Mammary epithelial cell (primary cell): ENCODE measurements at regions of chr1 and their contacts with region 1.

Region 1: GRCh38 chr1:180631766-180632325 is at the start of gene XPR1:
- DNase-seq: peak; percentile 97
- H3K4me3 ChIP-seq: peak within 1 kb of the TSS; percentile 83 to 99 (median 96)
- H3K27ac ChIP-seq: peak within 1 kb of the TSS; percentile 64
- H3K4me1 ChIP-seq: peaks cover 13% of the 10 kb centered on the region
- H3K27me3 ChIP-seq: no peaks in the 10 kb centered on the region
- CTCF ChIP-seq: peak; percentile 13 to 38
- total RNA-seq, gene XPR1: 44.1 to 109 TPM

Region 2: GRCh38 chr1:180571832-180572636 is 59.8 kb before region 1 on chr1:
- CTCF ChIA-PET with region 1: no interaction called
- dilution Hi-C with region 1: no loop called
- in situ Hi-C with region 1: no loop called
- intact Hi-C with region 1: loop called (anchors 5 kb)
- DNase-seq: peak; percentile 79
- H3K4me3 ChIP-seq: no peak overlapping the region
- H3K27ac ChIP-seq: peak overlapping the region; percentile 58
- H3K4me1 ChIP-seq: peaks cover 30% of the 10 kb centered on the region
- H3K27me3 ChIP-seq: no peaks in the 10 kb centered on the region
- CTCF ChIP-seq: no peak

Region 3: DNA sequence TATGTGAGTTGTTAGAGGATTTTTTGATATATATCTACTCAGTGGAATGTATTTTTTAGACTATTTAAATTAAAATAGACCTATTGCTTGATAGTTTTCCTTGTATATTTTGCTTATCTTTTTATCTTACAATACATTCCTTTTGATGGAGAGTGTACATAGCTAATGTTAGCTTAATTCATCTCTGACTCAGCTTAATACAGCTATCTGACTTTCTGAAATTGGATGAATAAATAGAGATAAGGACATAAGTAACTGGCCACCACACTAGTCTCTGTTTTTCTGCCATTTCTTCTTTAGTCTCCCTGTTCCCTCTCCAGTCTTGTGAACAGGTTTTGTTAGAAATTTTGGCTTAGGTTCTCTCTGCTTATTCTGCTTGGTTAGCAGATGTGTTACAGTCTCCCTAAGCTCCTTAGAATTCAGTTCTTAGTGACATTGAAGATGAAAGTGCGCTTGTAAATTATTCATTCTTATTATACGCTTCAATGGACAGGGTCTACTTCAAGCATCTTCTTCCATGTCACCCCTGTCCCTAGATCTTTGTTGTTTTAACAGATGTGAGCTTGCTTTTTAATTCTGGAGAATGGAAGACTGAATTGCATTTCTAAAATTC is 59.6 kb after region 1 on chr1:
- CTCF ChIA-PET with region 1: no interaction called
- dilution Hi-C with region 1: no loop called
- in situ Hi-C with region 1: no loop called
- intact Hi-C with region 1: no loop called
- DNase-seq: no peak
- H3K4me3 ChIP-seq: no peak overlapping the region
- H3K27ac ChIP-seq: no peak overlapping the region
- H3K4me1 ChIP-seq: no peaks in the 10 kb centered on the region
- H3K27me3 ChIP-seq: no peaks in the 10 kb centered on the region
- CTCF ChIP-seq: no peak

Region 4: DNA sequence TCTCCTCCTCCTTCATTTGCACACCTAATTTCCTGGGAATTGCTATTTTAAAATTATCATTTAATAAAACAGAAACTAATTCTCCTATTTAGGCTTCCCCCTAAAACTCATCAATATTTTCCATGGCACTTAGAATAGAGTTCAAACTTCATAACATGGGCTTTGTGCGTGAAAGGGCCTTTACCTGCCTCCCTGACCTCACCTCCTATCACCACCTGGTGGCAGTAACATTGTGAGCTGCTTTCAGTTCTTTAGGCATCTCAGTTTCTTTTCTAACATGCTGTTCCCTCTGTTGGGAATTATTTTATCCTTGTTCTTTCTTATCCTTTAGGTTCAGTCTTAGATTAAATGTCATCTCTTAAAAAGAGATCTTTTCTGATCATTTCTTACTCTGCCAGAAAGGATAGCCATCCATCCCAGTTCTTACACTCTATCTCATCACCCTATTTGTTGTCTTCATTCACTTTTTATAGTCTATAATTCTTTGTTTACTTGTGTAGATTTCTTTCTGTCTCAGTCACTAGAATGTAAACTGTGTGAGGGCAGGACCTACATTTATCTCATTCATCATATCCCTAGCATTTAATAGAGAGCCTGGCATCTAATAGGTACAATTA is 147.0 kb after region 1 on chr1:
- CTCF ChIA-PET with region 1: no interaction called
- dilution Hi-C with region 1: no loop called
- in situ Hi-C with region 1: no loop called
- intact Hi-C with region 1: loop called (anchors 5 kb)
- DNase-seq: peak; percentile 12
- H3K4me3 ChIP-seq: no peak overlapping the region
- H3K27ac ChIP-seq: no peak overlapping the region
- H3K4me1 ChIP-seq: no peaks in the 10 kb centered on the region
- H3K27me3 ChIP-seq: no peaks in the 10 kb centered on the region
- CTCF ChIP-seq: peak; percentile 63 to 66

Region 5: GRCh38 chr1:181033799-181034451 is 402.1 kb after region 1 on chr1 and contains the start of gene MR1:
- CTCF ChIA-PET with region 1: no interaction called
- dilution Hi-C with region 1: no loop called
- in situ Hi-C with region 1: no loop called
- intact Hi-C with region 1: loop called (anchors 10 kb)
- DNase-seq: peak; percentile 86
- H3K4me3 ChIP-seq: peak within 1 kb of the TSS; percentile 61 to 62 (median 62)
- H3K27ac ChIP-seq: peak within 1 kb of the TSS; percentile 94
- H3K4me1 ChIP-seq: peaks cover 21% of the 10 kb centered on the region
- H3K27me3 ChIP-seq: no peaks in the 10 kb centered on the region
- CTCF ChIP-seq: no peak
- total RNA-seq, gene MR1: 20.4 to 46.3 TPM

Region 6: GRCh38 chr1:181366910-181367309 is 735.1 kb after region 1 on chr1:
- CTCF ChIA-PET with region 1: no interaction called
- dilution Hi-C with region 1: no loop called
- in situ Hi-C with region 1: no loop called
- intact Hi-C with region 1: no loop called
- DNase-seq: no peak
- H3K4me3 ChIP-seq: no peak overlapping the region
- H3K27ac ChIP-seq: no peak overlapping the region
- H3K4me1 ChIP-seq: no peaks in the 10 kb centered on the region
- H3K27me3 ChIP-seq: no peaks in the 10 kb centered on the region
- CTCF ChIP-seq: no peak

Region 7: GRCh38 chr1:181397845-181398244 is 766.0 kb after region 1 on chr1:
- CTCF ChIA-PET with region 1: no interaction called
- dilution Hi-C with region 1: no loop called
- in situ Hi-C with region 1: no loop called
- intact Hi-C with region 1: no loop called
- DNase-seq: no peak
- H3K4me3 ChIP-seq: no peak overlapping the region
- H3K27ac ChIP-seq: no peak overlapping the region
- H3K4me1 ChIP-seq: no peaks in the 10 kb centered on the region
- H3K27me3 ChIP-seq: no peaks in the 10 kb centered on the region
- CTCF ChIP-seq: no peak